ENCODE measurements at regions of chr6 and their contacts with region 1.

Region 1: GRCh38 chr6:160950507-160950906 is 41.1 kb upstream of the MAP3K4 start:
- DNase-seq: peak; percentile 70
- H3K4me3 ChIP-seq: no peak overlapping the region
- H3K27ac ChIP-seq: peak overlapping the region; percentile 72
- H3K4me1 ChIP-seq: peaks cover 16% of the 10 kb centered on the region
- H3K27me3 ChIP-seq: no peaks in the 10 kb centered on the region
- CTCF ChIP-seq: no peak

Region 2: GRCh38 chr6:161031721-161032495 is 81.4 kb after region 1 on chr6:
- CTCF ChIA-PET with region 1: no interaction called
- dilution Hi-C with region 1: no loop called
- in situ Hi-C with region 1: no loop called
- intact Hi-C with region 1: loop called (anchors 5 kb)
- DNase-seq: peak; percentile 48
- H3K4me3 ChIP-seq: peak overlapping the region in 1 of 3 experiments; percentile 11
- H3K27ac ChIP-seq: peak overlapping the region; percentile 36
- H3K4me1 ChIP-seq: peaks cover 43% of the 10 kb centered on the region
- H3K27me3 ChIP-seq: no peaks in the 10 kb centered on the region
- CTCF ChIP-seq: no peak